Dendritic cell treated with granulocyte-macrophage colony-stimulating factor and Interleukin-4, amounts not matched to agents 40 ng/mL and 50 ng/mL, for 4 days (primary cell): ENCODE measurements at regions of chr5 and their contacts with region 1.

Region 1: GRCh38 chr5:113606298-113607134 is 93.0 kb downstream of the YTHDC2 start:
- H3K4me3 Mint-ChIP-seq: no peak overlapping the region
- H3K27ac Mint-ChIP-seq: no peak overlapping the region
- H3K4me1 Mint-ChIP-seq: peaks cover 8% of the 10 kb centered on the region
- H3K27me3 Mint-ChIP-seq: peaks cover 24% of the 10 kb centered on the region

Region 2: GRCh38 chr5:113378959-113379541 is 227.5 kb before region 1 on chr5:
- intact Hi-C with region 1: loop called (anchors 1 kb)
- H3K4me3 Mint-ChIP-seq: no peak overlapping the region
- H3K27ac Mint-ChIP-seq: no peak overlapping the region
- H3K4me1 Mint-ChIP-seq: peaks cover 8% of the 10 kb centered on the region
- H3K27me3 Mint-ChIP-seq: peaks cover 57% of the 10 kb centered on the region